Psoas muscle (tissue), 8 donors: ENCODE measurements at regions of chr13 and their contacts with region 1.

Region 1: DNA sequence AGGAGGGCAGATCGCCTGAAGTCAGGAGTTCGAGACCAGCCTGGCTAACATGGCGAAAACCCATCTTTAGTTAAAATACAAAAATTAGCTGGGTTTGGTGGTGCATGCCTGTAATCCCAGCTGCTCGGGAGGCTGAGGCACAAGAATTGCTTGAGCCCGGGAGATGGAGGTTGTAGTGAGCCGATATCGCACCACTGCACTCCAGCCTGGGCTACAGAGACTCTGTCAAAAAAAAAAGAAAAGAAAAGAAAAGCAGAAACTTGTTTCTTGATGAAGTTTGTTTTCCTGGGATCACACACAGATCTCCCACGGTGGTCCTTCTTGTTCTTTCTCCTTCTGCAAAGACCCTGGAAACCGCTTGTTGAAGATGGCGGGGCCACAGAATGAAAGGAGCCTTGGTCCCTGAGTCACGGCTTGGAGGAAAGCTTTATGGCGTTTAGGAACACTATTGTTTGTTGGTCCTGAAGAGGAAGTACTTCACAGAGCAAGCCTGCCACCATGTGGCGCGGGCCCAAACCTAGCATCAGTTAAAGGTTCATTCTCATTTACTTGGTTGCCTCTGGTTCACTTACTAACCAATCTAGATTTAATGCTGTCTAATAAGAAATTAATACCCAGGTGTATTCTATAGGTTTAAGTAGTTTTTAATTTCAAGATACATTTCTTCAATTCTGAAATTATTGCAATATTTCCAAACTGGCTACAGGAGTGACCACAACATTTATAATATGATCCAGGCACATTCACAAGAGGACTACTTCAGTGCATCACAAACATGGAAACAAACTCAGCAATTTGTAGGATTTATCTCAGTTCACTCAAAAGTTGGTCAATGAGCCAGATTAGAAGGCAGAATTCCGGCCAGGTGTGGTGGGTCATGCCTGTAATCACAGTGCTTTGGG is 21.3 kb upstream of the ARL11 start:
- DNase-seq: peak; percentile 84 to 91
- ATAC-seq: peak; percentile 89 to 100 (median 98)
- H3K4me3 ChIP-seq: peak overlapping the region; percentile 54
- H3K27ac ChIP-seq: no peak overlapping the region
- H3K4me1 ChIP-seq: no peaks in the 10 kb centered on the region
- H3K27me3 ChIP-seq: no peaks in the 10 kb centered on the region
- CTCF ChIP-seq: peak; percentile 84

Region 2: GRCh38 chr13:49495783-49496762 is 110.9 kb before region 1 on chr13 and contains the start of gene PHF11:
- intact Hi-C with region 1: loop called in 1 of 2 experiments (anchors 10 kb)
- DNase-seq: peak; percentile 82 to 91
- ATAC-seq: peak; percentile 92 to 93 (median 92)
- H3K4me3 ChIP-seq: peak within 1 kb of the TSS; percentile 87
- H3K27ac ChIP-seq: peak within 1 kb of the TSS; percentile 94
- H3K4me1 ChIP-seq: peaks cover 4% of the 10 kb centered on the region
- H3K27me3 ChIP-seq: no peaks in the 10 kb centered on the region
- CTCF ChIP-seq: peak; percentile 15
- total RNA-seq, gene PHF11: 8.2 to 14.7 (median 10.1) TPM